ENCODE measurements at regions of chr3 and their contacts with region 1.

Region 1: GRCh38 chr3:14678015-14678503 is 3.1 kb downstream of the C3orf20 start:
- DNase-seq: no peak
- H3K4me3 ChIP-seq: no peak overlapping the region
- H3K27ac ChIP-seq: no peak overlapping the region
- H3K4me1 ChIP-seq: no peaks in the 10 kb centered on the region
- H3K27me3 ChIP-seq: no peaks in the 10 kb centered on the region
- CTCF ChIP-seq: no peak
- EP300 ChIP-seq: no peak
- POLR2A ChIP-seq: no peak

Region 2: GRCh38 chr3:14289590-14290461 is 388.2 kb before region 1 on chr3:
- intact Hi-C with region 1: no loop called
- DNase-seq: no peak
- H3K4me3 ChIP-seq: no peak overlapping the region
- H3K27ac ChIP-seq: peak overlapping the region in 1 of 4 donors; percentile 61
- H3K4me1 ChIP-seq: peaks cover 0 to 19% (median 6%) of the 10 kb centered on the region in 4 donors
- H3K27me3 ChIP-seq: no peaks in the 10 kb centered on the region
- CTCF ChIP-seq: no peak
- EP300 ChIP-seq: no peak
- POLR2A ChIP-seq: no peak

Region 3: GRCh38 chr3:14640157-14640562 is 37.9 kb before region 1 on chr3:
- intact Hi-C with region 1: no loop called
- DNase-seq: no peak
- H3K4me3 ChIP-seq: no peak overlapping the region
- H3K27ac ChIP-seq: no peak overlapping the region
- H3K4me1 ChIP-seq: no peaks in the 10 kb centered on the region
- H3K27me3 ChIP-seq: peaks cover 0 to 49% (median 0%) of the 10 kb centered on the region in 3 donors
- CTCF ChIP-seq: no peak
- EP300 ChIP-seq: no peak
- POLR2A ChIP-seq: no peak

Region 4: GRCh38 chr3:14780927-14781507 is 103.0 kb after region 1 on chr3:
- intact Hi-C with region 1: loop called (anchors 2 kb)
- DNase-seq: peak; percentile 72
- H3K4me3 ChIP-seq: no peak overlapping the region
- H3K27ac ChIP-seq: no peak overlapping the region
- H3K4me1 ChIP-seq: no peaks in the 10 kb centered on the region
- H3K27me3 ChIP-seq: peaks cover 0 to 2% (median 0%) of the 10 kb centered on the region in 3 donors
- CTCF ChIP-seq: peak in 3 of 4 experiments; percentile 27 to 48 (median 28)
- EP300 ChIP-seq: no peak
- POLR2A ChIP-seq: no peak